ENCODE measurements at regions of chrX and their contacts with region 1.

Region 1: DNA sequence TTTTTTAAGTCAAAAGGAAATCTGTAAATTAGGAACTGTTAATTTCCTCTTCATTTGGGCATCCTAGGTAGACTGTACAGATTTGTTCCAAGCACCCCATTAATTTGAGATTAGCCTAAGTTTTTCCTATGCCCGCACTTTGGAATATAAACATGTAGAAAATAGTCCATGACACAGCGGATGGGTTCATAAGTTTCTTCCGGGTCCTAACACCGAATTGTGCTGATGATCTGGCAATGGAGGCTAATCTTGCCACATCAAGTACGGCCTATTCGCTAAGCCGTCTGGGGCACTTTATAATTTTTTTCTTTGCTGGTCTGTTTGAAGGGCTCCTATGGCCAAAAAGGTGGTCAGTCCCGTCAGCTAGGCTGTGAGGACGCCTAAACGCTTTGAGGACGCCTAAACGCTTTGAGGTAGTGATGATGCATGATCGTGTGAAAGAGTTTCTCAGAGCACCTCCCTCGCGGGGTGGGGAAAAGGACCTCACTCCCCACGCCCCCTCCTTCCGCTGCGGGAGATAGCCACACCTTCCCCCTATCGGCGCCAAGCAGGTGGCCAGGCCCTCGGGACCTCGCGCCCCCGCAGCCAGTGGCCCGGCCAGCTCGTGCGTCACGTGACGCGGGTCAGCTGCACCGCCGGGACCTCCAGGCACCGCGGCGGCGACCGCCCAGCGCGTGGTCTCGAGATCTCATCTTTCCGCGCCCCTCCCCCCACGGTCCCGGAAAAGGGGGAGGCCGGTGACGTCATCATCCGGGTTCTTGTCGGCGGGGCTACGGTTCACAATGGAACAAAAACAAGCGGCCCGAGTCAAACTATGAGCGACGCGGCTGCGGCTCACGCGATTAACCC is 977 bp upstream of the USP9X start:
- DNase-seq: peak; percentile 99
- H3K4me3 ChIP-seq: peak overlapping the region; percentile 75 to 96 (median 88)
- H3K27ac ChIP-seq: peak overlapping the region; percentile 95 to 98 (median 97)
- H3K4me1 ChIP-seq: peaks cover 2 to 28% (median 13%) of the 10 kb centered on the region in 4 donors
- H3K27me3 ChIP-seq: no peaks in the 10 kb centered on the region
- CTCF ChIP-seq: no peak
- EP300 ChIP-seq: peak; percentile 64
- POLR2A ChIP-seq: peak; percentile 61

Region 2: DNA sequence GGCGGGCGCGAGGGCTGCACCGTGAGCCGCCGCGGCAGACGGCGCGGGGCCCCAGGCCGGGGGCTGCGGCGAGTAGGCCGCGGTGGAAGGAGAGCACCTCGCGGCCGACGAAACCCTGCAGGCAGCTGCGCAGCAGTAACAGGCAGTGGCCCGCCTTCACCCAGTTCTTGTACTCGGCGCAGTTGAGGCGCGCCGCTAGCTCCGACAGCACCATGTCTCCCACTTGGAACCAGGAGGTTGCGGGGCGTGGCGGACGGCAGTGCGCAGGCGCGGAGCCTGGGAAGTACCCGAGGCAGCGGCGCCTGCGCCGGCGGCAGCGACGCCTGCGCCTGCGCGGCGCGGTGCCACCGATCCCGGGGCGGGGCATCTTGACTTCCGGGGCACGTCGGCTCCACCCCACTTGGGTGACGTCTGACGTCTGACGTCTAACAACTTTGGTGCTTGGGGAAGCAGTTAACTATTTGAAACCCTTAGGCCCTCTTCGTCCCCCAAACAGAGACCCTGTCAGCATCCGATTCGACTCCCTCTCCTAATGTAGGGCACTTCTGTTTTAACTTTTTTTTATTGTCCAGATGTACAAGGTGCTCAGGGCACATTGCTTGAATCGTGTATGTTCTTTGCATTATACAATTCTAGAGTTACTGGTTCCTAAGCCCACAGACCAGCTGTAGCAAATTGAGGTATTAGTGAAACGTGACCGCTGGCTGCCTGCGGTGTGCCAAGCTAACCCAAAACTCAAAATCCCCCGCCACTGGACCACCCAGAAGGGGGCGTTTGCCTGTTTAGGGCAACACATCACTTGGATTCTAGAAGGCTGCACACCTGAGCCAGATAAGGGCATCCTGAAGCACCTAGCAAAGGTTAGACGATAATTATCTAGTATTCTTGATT is 436.7 kb before region 1 on chrX and contains the start of gene CXorf38:
- intact Hi-C with region 1: loop called (anchors 10 kb)
- DNase-seq: peak; percentile 93
- H3K4me3 ChIP-seq: peak within 1 kb of the TSS; percentile 81 to 93 (median 86)
- H3K27ac ChIP-seq: peak within 1 kb of the TSS; percentile 81 to 84 (median 82)
- H3K4me1 ChIP-seq: peaks cover 28 to 47% (median 36%) of the 10 kb centered on the region in 4 donors
- H3K27me3 ChIP-seq: no peaks in the 10 kb centered on the region
- CTCF ChIP-seq: peak in 1 of 3 experiments; percentile 20
- EP300 ChIP-seq: no peak
- POLR2A ChIP-seq: peak; percentile 37
- total RNA-seq, gene CXorf38: 5.4 to 10.8 (median 9.2) TPM

Region 3: GRCh38 chrX:40735325-40736169 is 348.7 kb before region 1 on chrX and contains the start of gene MED14:
- intact Hi-C with region 1: loop called (anchors 10 kb)
- DNase-seq: peak; percentile 92
- H3K4me3 ChIP-seq: peak within 1 kb of the TSS; percentile 71 to 78 (median 73)
- H3K27ac ChIP-seq: peak within 1 kb of the TSS; percentile 85 to 96 (median 93)
- H3K4me1 ChIP-seq: peaks cover 0 to 43% (median 29%) of the 10 kb centered on the region in 4 donors
- H3K27me3 ChIP-seq: peaks cover 0 to 4% (median 0%) of the 10 kb centered on the region in 4 donors
- CTCF ChIP-seq: peak; percentile 41 to 50 (median 44)
- EP300 ChIP-seq: no peak
- POLR2A ChIP-seq: peak; percentile 9
- total RNA-seq, gene MED14: 20.0 to 29.9 (median 24.3) TPM

Region 4: GRCh38 chrX:40933132-40933705 is 151.0 kb before region 1 on chrX:
- intact Hi-C with region 1: loop called (anchors 5 kb)
- DNase-seq: no peak
- H3K4me3 ChIP-seq: peak overlapping the region; percentile 22 to 36 (median 28)
- H3K27ac ChIP-seq: peak overlapping the region; percentile 64 to 74 (median 70)
- H3K4me1 ChIP-seq: peaks cover 7 to 30% (median 25%) of the 10 kb centered on the region in 4 donors
- H3K27me3 ChIP-seq: no peaks in the 10 kb centered on the region
- CTCF ChIP-seq: no peak
- EP300 ChIP-seq: no peak
- POLR2A ChIP-seq: no peak

Region 5: DNA sequence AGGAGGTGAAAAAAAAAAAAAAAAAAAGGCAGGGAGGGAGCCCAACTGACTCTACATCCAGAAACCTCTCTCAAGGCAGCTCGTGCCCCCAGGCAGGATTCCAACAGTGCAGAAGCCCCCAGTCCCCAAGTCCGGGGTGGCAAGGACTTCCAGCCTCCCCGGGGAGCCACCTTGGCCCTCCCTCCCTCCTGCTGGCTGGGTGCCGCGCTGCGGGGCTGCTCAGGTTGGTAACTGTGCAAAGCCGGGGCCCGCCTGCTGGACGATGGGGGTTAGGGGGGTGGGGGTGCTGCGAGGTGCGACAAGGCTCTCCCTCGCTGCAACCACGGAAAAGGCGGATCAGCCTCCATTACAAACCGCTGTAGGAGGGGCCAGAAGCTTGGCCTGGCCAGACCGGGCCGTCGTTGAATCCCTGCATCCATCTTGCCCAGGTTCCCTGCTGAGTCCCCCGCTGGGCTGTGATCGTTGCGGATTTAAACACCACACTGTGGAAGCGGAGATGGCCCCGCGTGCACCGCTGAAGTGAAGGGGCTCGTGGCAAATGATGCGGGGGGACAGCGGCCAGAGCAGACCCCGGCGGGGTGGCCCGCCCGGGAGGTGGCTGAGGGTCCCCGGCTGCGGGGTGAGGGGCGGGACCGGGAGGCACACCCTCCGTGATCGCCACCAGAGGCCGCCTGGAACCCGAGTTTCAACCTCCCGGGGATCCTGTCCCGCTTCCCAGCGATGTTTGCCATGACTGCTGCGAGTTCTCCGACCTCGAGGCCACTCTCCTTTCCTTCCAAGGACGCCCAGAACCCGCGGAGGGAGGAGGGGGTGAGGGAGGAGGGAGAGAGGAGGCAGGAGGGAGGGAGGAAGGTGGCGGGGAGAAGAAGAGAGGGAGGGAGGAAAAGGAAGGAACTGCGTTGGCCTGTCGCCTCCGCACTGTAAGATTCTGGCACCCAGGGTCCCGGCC is 191.7 kb after region 1 on chrX:
- intact Hi-C with region 1: no loop called
- DNase-seq: peak; percentile 91
- H3K4me3 ChIP-seq: peak overlapping the region; percentile 54 to 67 (median 56)
- H3K27ac ChIP-seq: peak overlapping the region; percentile 61 to 79 (median 76)
- H3K4me1 ChIP-seq: peaks cover 6 to 21% (median 11%) of the 10 kb centered on the region in 4 donors
- H3K27me3 ChIP-seq: no peaks in the 10 kb centered on the region
- CTCF ChIP-seq: peak; percentile 42 to 49 (median 43)
- EP300 ChIP-seq: no peak
- POLR2A ChIP-seq: no peak

Region 6: DNA sequence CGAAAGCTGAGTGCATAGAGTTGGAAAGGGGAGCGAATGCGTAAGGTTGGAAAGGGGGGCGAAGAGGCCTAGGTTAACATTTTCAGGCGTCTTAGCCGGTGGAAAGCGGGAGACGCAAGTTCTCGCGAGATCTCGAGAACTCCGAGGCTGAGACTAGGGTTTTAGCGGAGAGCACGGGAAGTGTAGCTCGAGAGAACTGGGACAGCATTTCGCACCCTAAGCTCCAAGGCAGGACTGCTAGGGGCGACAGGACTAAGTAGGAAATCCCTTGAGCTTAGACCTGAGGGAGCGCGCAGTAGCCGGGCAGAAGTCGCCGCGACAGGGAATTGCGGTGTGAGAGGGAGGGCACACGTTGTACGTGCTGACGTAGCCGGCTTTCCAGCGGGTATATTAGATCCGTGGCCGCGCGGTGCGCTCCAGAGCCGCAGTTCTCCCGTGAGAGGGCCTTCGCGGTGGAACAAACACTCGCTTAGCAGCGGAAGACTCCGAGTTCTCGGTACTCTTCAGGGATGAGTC is 249.5 kb after region 1 on chrX and contains the start of gene DDX3X:
- intact Hi-C with region 1: loop called (anchors 10 kb)
- DNase-seq: peak; percentile 93
- H3K4me3 ChIP-seq: peak within 1 kb of the TSS; percentile 78 to 90 (median 84)
- H3K27ac ChIP-seq: peak within 1 kb of the TSS; percentile 99 to 100 (median 100)
- H3K4me1 ChIP-seq: peaks cover 18 to 52% (median 31%) of the 10 kb centered on the region in 4 donors
- H3K27me3 ChIP-seq: no peaks in the 10 kb centered on the region
- CTCF ChIP-seq: peak in 2 of 3 experiments; percentile 10 to 25
- EP300 ChIP-seq: no peak
- POLR2A ChIP-seq: peak; percentile 98
- total RNA-seq, gene DDX3X: 169 to 282 (median 253) TPM

Measured in esophagus muscularis mucosa (tissue), 4 donors.